ENCODE measurements at regions of chr11 and their contacts with region 1.

Region 1: GRCh38 chr11:125679397-125679796 is 1.2 kb downstream of the ACRV1 start:
- DNase-seq: no peak
- ATAC-seq: no peak
- H3K4me3 ChIP-seq: no peak overlapping the region
- H3K27ac ChIP-seq: no peak overlapping the region
- H3K4me1 ChIP-seq: no peaks in the 10 kb centered on the region
- H3K27me3 ChIP-seq: no peaks in the 10 kb centered on the region
- CTCF ChIP-seq: no peak
- POLR2A ChIP-seq: no peak

Region 2: GRCh38 chr11:125532668-125533067 is 146.7 kb before region 1 on chr11:
- in situ Hi-C with region 1: loop called in 1 of 4 experiments (anchors 25 kb)
- intact Hi-C with region 1: no loop called
- DNase-seq: no peak
- ATAC-seq: no peak
- H3K4me3 ChIP-seq: no peak overlapping the region
- H3K27ac ChIP-seq: no peak overlapping the region
- H3K4me1 ChIP-seq: no peaks in the 10 kb centered on the region
- H3K27me3 ChIP-seq: no peaks in the 10 kb centered on the region
- CTCF ChIP-seq: no peak
- POLR2A ChIP-seq: no peak

Measured in gastrocnemius medialis (tissue), 4 donors.